HEK293 (cell line): ENCODE measurements at regions of chr22 and their contacts with region 1.

Region 1: DNA sequence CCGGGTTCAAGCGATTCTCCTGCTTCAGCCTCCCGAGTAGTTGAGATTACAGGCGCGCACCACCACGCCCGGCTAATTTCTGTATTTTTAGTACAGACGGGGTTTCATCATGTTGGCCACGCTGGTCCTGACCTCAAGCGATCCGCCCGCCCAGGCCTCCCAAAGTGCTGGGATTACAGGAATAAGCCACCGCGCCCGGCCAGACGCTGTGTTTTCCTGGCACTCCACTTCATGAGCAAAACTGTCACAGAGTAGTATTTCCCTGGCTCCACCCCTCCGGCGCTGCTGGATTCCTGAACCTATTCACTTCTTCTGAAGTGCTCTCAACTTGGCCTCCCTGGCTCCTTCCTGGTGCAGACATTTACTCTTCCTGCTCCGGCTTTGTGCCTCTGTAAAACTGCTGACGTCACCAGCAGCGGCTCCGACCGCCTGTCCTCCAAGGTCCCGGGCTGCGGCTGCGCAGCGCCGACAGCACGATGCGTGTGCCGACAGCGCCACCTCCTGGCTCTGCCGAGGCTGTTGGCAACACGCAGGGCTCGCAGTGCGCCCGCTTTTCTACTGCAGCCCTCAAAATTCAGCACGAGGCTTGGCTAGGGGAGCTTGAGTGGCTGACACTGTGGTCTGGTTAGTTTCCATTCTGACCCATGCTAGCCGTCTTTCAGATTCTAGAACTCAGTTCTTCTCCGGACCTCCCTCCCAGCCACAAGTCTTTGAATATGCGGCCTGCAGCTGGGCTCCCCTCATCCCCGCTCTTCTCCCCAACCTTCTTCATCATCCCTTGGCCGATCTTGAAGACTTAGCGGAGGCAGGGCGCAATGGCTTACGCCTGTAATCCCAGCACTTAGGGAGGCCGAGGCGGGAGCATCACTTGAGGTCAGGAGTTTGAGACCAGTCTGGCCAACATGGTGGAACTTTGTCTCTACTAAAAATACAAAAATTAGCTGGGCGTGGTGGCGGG is 36.6 kb downstream of the APOL3 start:
- H3K4me3 ChIP-seq: no peak overlapping the region
- H3K27ac ChIP-seq: no peak overlapping the region
- H3K4me1 ChIP-seq: no peaks in the 10 kb centered on the region; the same call in 1 of the 2 replicates
- CTCF ChIP-seq: peak; percentile 99

Region 2: DNA sequence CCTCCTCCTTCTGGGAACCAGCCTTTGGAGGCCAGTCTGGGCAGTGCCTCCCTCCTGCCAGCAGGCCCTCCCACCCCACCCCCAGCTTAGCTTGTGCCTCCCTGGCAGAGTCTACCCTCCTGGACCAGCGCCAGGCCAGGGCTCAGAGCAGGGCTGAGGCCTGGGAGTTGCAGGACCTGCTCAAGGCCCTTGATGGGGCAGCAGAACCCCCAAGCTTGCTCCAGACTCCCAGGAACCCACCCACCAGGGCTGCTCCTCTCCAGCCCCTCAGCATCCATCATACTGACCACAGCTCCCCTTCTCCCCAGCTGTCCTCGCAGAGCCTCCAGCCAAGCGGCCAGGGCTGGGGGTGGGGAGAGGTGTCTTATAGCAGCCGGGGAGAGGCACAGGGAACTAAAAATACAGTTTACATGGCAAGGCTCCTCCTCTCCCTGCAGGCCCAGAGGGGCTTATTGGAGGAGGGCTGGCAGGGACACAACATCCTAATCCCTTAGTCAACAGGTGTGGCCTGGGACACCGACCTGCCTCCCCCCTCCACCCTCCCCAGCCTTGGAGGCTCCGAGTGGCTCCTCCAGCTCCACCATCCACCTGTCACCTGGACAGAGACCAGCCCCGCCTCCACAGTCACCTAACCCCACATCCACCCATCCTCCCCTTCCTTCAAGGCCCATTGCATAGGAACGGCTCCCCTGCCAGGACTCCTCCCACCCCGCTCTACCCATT is 501.6 kb before region 1 on chr22:
- CTCF ChIA-PET with region 1: interaction called, 10 read pairs
- POLR2A ChIA-PET with region 1: no interaction called
- H3K4me3 ChIP-seq: no peak overlapping the region
- H3K27ac ChIP-seq: no peak overlapping the region
- H3K4me1 ChIP-seq: no peaks in the 10 kb centered on the region
- CTCF ChIP-seq: no peak

Region 3: DNA sequence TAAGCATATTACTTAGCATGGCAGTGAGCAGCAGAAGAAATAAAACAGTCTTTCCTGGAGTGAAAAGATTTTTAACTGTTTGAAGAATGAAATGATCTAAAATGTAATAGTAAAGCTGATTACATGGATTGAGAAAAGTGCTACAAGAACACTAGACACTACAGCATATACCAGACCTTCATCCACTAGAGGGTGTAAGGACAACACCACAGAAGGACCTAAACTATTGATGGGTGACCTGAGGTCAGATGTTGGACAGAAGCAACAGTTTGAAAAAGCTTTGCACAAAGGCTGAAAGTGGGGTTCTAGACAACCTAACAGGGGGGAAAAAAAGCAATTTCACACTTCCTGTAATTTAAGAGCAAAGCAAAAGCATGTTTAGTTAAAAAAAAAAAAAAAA is 193.0 kb before region 1 on chr22:
- CTCF ChIA-PET with region 1: interaction called, 29 read pairs
- POLR2A ChIA-PET with region 1: no interaction called
- H3K4me3 ChIP-seq: no peak overlapping the region
- H3K27ac ChIP-seq: no peak overlapping the region
- H3K4me1 ChIP-seq: no peaks in the 10 kb centered on the region; the same call in 1 of the 2 replicates
- CTCF ChIP-seq: peak; percentile 43

Region 4: GRCh38 chr22:36052505-36053270 is 71.3 kb before region 1 on chr22:
- CTCF ChIA-PET with region 1: no interaction called
- POLR2A ChIA-PET with region 1: no interaction called
- H3K4me3 ChIP-seq: no peak overlapping the region
- H3K27ac ChIP-seq: no peak overlapping the region
- H3K4me1 ChIP-seq: 0 out of 2 replicates have a peak, but pooled peaks cover 3% of the 10 kb centered on the region
- CTCF ChIP-seq: no peak

Region 5: GRCh38 chr22:36136475-36136874 is 12.5 kb after region 1 on chr22:
- CTCF ChIA-PET with region 1: interaction called, 14 read pairs
- POLR2A ChIA-PET with region 1: interaction called, 3 read pairs
- H3K4me3 ChIP-seq: no peak overlapping the region
- H3K27ac ChIP-seq: no peak overlapping the region
- H3K4me1 ChIP-seq: no peaks in the 10 kb centered on the region
- CTCF ChIP-seq: no peak